SK-N-SH (cell line): ENCODE measurements at regions of chr16 and their contacts with region 1.

Region 1: DNA sequence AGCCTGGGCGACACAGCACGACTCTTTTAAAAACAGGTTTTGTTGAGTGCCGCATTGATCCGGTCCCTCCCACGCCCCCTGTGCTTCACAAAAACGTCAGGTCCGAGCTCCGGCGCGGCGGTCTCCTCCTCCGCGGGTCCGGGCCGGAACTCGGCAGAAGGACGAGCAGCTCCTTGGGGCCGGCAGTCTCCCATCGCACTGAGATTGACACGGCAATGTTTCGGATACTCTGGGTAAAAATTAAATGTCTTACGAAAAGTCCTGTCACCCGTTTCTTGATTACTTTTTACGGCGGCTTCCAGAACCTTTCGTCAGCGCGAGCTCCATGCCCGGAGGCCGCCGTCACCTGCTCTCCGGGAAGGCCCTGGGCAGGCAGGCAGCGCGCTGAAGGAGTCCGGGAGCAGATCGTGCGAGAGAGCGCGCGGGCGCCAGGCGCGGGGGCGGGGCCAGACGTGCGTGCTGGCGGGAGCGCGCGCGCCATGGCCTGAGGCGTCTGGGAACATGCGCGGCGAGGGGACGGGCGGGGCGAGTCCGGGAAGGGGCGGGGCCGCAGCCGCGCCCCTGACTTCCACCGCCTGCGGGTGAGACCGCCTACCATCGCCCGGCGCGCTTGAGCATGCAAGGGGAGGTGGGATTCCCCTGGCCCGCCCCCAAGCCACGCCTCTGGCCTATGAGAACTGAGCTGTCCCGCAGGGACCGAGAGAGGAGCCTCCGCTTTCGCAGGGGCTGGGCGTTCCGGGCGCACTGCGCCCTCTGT is 11.7 kb upstream of the SRL start:
- DNase-seq: peak; percentile 99
- H3K4me3 ChIP-seq: peak overlapping the region; percentile 50 to 81
- H3K27ac ChIP-seq: peak overlapping the region; percentile 73 to 79
- H3K4me1 ChIP-seq: no peaks in the 10 kb centered on the region
- H3K27me3 ChIP-seq: no peaks in the 10 kb centered on the region
- CTCF ChIP-seq: no peak
- EP300 ChIP-seq: peak in 1 of 2 experiments; percentile 52; a peak in 2 of 4 replicates
- RAD21 ChIP-seq: peak; percentile 90

Region 2: GRCh38 chr16:3983081-3983520 is 270.5 kb before region 1 on chr16:
- CTCF ChIA-PET with region 1: interaction called, 80 read pairs
- POLR2A ChIA-PET with region 1: interaction called, 10 read pairs
- DNase-seq: peak; percentile 91
- H3K4me3 ChIP-seq: no peak overlapping the region; a peak in 1 of 4 replicates
- H3K27ac ChIP-seq: no peak overlapping the region
- H3K4me1 ChIP-seq: peaks cover 13% of the 10 kb centered on the region in 2 experiments; a peak in 3 of 4 replicates
- H3K27me3 ChIP-seq: no peaks in the 10 kb centered on the region
- CTCF ChIP-seq: peak; percentile 70
- EP300 ChIP-seq: no peak
- RAD21 ChIP-seq: peak; percentile 95

Region 3: DNA sequence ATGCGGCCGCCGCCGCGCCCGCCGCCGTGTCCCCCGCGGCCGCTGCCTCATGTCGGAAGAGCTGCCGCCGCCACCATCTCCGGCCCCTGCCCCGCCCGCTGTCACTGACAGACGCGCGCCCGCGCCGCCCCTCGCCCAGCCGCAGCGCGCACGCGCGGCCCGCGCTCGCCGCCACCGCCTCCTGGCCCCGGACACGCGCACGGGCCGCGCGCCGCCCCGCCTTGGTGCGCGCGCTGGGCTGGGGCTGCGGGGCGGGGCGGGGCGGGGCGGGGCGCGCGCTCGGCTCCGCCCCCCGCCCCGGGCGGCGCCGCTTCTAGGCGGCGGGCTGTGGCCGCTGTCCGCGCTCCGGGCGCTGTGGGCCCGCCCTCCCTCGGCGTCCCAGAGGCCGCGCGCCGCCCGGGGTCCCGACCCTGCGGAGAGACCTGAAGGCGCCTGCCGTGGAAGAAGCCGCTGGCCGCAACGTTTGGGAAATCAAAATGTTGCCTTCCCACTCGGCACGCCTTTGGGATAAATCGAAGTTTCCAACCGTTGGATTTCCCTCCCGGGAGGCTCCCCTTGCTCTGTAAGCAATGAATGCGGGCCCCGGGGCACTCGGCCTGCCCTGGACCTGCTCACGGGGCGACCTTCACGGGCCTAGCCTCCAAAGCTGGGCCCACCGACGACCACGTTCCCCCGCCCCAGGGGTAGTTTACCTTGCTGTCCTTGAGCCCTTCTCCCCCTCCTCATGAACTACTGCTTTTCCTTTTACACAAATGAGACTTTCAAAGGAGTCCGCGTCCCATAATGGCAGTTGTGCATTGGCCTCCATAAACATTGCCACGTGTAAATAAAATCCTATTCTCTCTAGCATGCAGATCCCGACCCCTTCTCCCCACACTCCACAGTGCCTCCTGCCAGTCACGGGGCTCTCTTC is 137.0 kb before region 1 on chr16 and contains the start of gene ADCY9:
- CTCF ChIA-PET with region 1: interaction called, 18 read pairs
- POLR2A ChIA-PET with region 1: interaction called, 5 read pairs
- DNase-seq: peak; percentile 100
- H3K4me3 ChIP-seq: peak within 1 kb of the TSS; percentile 58 to 67
- H3K27ac ChIP-seq: peak within 1 kb of the TSS in 1 of 2 experiments; percentile 40; a peak in 1 of 4 replicates
- H3K4me1 ChIP-seq: peaks cover 5 to 28% of the 10 kb centered on the region in 2 experiments; a peak in 3 of 4 replicates
- H3K27me3 ChIP-seq: no peaks in the 10 kb centered on the region
- CTCF ChIP-seq: no peak
- EP300 ChIP-seq: no peak
- RAD21 ChIP-seq: no peak
- polyA plus RNA-seq, gene ADCY9: 2.7 and 5.2 TPM in 2 replicates

Region 4: GRCh38 chr16:4217204-4218131 is 36.1 kb before region 1 on chr16:
- CTCF ChIA-PET with region 1: interaction called, 14 read pairs
- POLR2A ChIA-PET with region 1: interaction called, 6 read pairs
- DNase-seq: peak; percentile 77
- H3K4me3 ChIP-seq: no peak overlapping the region
- H3K27ac ChIP-seq: no peak overlapping the region
- H3K4me1 ChIP-seq: peaks cover 8 to 10% of the 10 kb centered on the region in 2 experiments; a peak in 2 of 4 replicates
- H3K27me3 ChIP-seq: no peaks in the 10 kb centered on the region
- CTCF ChIP-seq: no peak
- EP300 ChIP-seq: no peak
- RAD21 ChIP-seq: no peak

Region 5: DNA sequence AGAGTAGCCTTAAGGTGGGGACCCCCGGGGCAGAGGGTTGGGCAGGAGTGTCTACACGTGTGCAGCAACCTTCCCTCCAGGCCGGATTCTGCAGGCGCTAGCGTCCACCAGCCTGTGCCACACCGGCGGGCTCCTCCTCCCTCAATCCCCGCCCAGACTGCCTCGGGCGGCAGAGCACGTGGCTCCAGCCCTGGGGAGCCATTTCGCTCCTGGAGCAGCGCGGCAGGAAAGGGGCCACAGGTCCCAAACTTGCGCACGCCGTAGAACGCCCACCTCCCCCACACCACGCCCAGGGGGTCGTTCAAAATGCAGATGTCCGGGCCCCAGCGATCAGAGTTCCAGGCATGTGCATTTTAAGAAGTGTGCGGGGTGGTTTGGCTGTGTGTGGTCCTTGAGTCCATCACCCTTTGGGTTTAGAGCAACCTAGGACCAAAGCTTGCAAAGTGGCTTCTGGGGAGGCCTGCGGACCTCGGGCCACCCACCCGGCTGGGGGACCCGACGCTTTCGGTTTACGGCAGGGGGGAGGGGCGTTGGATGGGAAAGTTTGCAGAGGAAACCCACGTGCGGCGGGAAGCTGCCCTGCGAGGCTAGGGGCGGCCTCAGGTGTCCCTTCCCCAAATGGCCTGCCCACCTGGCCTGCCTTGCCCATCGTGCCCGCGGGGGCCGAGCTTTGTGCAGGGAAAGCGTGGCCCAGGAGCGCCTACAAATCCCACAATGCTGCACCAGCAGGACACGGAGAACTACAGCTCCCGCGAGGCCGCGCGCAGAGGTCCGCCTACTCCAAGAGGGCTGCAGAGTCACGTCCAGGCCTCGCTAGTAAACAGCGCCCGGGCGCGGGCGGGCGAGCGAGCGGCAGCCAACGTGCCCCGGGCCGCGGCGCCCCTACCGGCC is 17.8 kb after region 1 on chr16:
- CTCF ChIA-PET with region 1: interaction called, 203 read pairs
- POLR2A ChIA-PET with region 1: interaction called, 22 read pairs
- DNase-seq: peak; percentile 90
- H3K4me3 ChIP-seq: peak overlapping the region; percentile 65 to 84
- H3K27ac ChIP-seq: peak overlapping the region; percentile 79 to 91
- H3K4me1 ChIP-seq: peaks cover 0 to 12% of the 10 kb centered on the region in 2 experiments; a peak in 1 of 4 replicates
- H3K27me3 ChIP-seq: no peaks in the 10 kb centered on the region
- CTCF ChIP-seq: no peak
- EP300 ChIP-seq: no peak
- RAD21 ChIP-seq: no peak

Region 6: DNA sequence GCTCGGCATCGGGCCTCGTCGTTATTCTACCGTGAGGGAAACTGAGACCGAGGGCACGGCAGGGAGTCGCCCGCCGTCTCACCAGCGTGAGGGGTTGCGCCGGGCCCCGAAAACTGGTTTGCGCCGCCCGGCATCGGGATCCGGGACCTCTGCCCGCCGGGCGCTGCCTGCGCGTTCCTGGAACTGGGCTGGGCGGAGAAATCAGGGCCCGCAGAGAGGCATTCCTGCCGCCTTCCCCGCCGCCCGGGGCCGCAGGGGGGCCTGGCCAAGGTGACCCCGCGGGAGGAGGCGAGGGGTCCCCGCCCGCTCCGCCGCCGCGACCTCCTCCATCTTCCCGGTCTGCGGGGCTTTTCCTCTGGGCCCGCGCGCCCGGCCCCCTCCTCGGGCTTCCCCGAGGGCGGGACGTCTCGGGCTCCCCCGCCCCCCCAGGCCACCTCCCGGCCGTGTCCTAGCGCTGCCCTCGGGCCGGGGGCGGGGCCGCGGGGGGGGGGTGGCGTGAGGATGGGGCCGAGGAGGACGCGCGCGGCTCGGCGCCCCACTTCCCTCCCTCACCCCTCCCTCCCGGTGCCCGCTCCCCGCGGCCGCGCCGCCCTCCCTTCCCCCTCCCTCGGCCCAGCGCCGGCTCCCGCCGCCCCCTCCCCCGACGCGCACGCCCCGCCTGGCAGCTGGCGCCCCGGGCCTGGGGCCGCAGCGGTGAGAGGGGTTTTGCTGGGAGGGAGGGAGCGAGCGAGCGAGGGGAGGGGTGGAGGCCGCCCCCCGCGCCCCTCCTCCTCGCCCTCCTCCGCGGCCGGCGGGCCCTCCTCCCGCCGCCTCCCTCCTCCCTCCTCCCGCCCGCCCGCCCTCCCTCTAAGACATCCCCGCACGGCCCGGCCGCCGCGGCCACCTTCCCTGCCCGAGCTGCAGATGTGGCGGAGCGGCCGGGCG is 61.9 kb after region 1 on chr16 and contains the start of gene GLIS2:
- CTCF ChIA-PET with region 1: interaction called, 12 read pairs
- POLR2A ChIA-PET with region 1: no interaction called
- DNase-seq: peak; percentile 94
- H3K4me3 ChIP-seq: peak within 1 kb of the TSS; percentile 76 to 81
- H3K27ac ChIP-seq: peak within 1 kb of the TSS; percentile 78 to 84
- H3K4me1 ChIP-seq: peaks cover 13 to 41% of the 10 kb centered on the region in 2 experiments; a peak in 1 of 4 replicates
- H3K27me3 ChIP-seq: no peaks in the 10 kb centered on the region
- CTCF ChIP-seq: no peak
- EP300 ChIP-seq: no peak
- RAD21 ChIP-seq: no peak
- polyA plus RNA-seq, gene GLIS2: 3.3 and 6.5 TPM in 2 replicates

Region 7: DNA sequence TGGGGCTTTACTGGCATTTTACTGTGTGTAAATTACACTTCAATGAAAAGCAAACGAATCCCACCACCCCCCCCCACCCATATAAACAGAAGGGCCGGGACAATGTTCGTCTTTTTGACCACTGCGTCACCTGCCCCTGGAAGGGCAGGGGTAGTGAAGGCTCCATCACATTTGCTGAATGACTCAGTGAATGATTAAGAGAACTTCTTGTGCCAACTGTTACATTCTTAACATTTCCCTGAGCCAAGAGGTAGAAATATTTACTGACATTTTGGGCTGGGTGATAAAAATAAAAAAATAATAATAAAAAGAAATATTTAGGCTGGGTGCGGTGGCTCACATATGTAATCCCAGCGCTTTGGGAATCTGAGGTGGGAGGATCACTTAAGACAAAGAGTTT is 326.7 kb after region 1 on chr16:
- CTCF ChIA-PET with region 1: no interaction called
- POLR2A ChIA-PET with region 1: no interaction called
- DNase-seq: no peak
- H3K4me3 ChIP-seq: no peak overlapping the region
- H3K27ac ChIP-seq: no peak overlapping the region
- H3K4me1 ChIP-seq: no peaks in the 10 kb centered on the region
- H3K27me3 ChIP-seq: no peaks in the 10 kb centered on the region
- CTCF ChIP-seq: no peak
- EP300 ChIP-seq: no peak
- RAD21 ChIP-seq: no peak